OCI-LY7 (cell line): ENCODE measurements at regions of chr1 and their contacts with region 1.

Region 1: DNA sequence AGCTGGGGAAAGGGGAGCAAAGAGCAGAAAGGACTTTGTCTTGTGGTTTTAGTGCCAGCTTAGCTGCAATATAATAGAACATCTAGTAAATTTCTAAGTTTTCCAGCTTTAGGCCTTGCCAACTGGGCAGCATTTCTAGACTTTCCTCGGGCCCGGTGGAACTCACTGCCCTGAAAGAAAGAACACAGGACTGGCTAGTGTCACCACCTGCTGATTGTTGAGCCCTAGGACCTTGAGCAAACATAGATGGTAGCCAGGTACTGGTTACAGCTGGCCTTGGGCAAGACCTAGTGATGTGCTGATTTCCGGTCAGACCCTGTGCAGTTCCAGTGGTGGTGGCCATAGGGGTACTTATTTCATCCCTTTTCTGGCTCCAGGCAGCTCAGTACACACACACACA is 753.2 kb upstream of the B3GALT2 start:
- DNase-seq: no peak
- H3K4me3 ChIP-seq: no peak overlapping the region
- H3K27ac ChIP-seq: no peak overlapping the region
- H3K4me1 ChIP-seq: no peaks in the 10 kb centered on the region
- CTCF ChIP-seq: no peak

Region 2: DNA sequence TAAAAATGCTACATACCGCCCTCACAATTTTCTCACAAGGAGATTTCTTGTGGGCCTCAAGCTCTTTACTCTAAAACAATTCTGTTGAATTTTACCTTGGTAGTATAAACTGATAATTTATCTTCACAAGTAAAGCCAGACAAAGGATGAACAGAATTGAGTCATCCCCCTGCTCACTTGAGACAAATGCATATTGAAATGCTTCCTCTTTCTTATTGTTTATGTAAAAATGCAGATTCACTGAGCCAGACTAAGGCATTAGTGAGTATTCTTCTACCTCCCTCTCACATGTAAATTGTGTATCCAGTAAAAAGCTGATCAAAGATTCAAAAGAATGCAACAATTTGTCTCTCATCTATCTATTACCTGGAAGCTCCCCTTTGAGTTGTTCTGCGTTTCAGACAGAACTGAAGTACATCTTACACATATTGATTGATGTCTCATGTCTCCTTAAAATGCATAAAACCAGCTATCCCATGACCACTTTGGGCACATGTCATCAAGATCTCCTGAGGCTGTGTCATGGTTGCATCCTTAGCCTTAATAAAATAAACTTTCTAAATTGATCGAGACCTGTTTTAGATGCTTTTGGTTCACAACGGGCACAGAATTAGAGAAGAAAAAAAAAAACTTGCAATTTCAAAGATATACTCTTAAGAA is 10.1 kb before region 1 on chr1:
- CTCF ChIA-PET with region 1: interaction called, 10 read pairs
- POLR2A ChIA-PET with region 1: interaction called, 8 read pairs
- intact Hi-C with region 1: no loop called
- DNase-seq: no peak
- H3K4me3 ChIP-seq: no peak overlapping the region
- H3K27ac ChIP-seq: no peak overlapping the region
- H3K4me1 ChIP-seq: no peaks in the 10 kb centered on the region
- CTCF ChIP-seq: no peak

Region 3: DNA sequence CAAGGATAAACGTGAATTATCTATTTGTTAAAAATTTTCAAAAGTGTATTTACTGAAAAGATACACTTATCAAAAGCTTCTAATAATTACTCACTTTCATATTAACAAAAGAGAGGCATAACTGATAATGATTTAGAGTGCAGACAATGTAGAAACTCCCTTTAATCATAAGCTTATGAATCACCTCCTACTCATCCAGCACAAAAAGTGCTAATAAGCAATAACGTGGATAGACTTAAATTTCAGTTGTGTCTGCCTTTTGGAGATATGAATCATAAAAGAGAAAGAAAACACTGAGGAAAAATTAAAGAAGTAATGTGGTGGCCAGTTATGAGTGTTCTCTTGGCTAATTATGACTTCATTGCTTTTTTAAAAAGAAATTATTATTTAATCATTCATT is 74.4 kb after region 1 on chr1:
- CTCF ChIA-PET with region 1: no interaction called
- POLR2A ChIA-PET with region 1: no interaction called
- intact Hi-C with region 1: no loop called
- DNase-seq: no peak
- H3K4me3 ChIP-seq: no peak overlapping the region
- H3K27ac ChIP-seq: no peak overlapping the region
- H3K4me1 ChIP-seq: no peaks in the 10 kb centered on the region
- CTCF ChIP-seq: no peak